ENCODE measurements at regions of chr11 and their contacts with region 1.

Region 1: DNA sequence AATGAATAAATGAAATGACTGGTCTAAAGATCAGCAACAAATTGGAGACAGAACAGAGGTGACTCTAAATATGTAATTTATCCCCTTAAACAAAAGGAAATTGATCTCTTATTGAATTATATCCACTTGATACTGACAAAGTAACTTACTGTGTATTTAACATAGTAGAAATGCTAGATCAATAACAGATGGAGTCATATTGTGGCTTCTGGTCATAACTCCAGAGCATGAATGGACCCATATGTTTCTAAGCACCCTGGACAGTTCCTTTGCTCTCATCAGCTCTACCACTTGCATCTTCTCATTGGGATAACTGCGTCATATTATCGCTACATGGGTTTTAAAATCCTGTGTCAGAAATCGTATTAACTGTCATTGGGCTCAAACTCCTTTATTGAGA is 222.3 kb downstream of the ETS1 start:
- DNase-seq: no peak
- H3K4me3 ChIP-seq: no peak overlapping the region
- H3K27ac ChIP-seq: no peak overlapping the region
- H3K4me1 ChIP-seq: no peaks in the 10 kb centered on the region
- H3K27me3 ChIP-seq: no peaks in the 10 kb centered on the region
- CTCF ChIP-seq: no peak

Region 2: GRCh38 chr11:128375961-128376360 is 10.9 kb after region 1 on chr11:
- CTCF ChIA-PET with region 1: no interaction called
- POLR2A ChIA-PET with region 1: interaction called, 22 read pairs
- intact Hi-C with region 1: no loop called
- DNase-seq: peak in 1 of 2 experiments; percentile 54
- H3K4me3 ChIP-seq: no peak overlapping the region
- H3K27ac ChIP-seq: no peak overlapping the region
- H3K4me1 ChIP-seq: peaks cover 7% of the 10 kb centered on the region; the same call in 1 of the 2 replicates
- H3K27me3 ChIP-seq: no peaks in the 10 kb centered on the region
- CTCF ChIP-seq: no peak